ENCODE measurements at regions of chr1 and their contacts with region 1.

Region 1: DNA sequence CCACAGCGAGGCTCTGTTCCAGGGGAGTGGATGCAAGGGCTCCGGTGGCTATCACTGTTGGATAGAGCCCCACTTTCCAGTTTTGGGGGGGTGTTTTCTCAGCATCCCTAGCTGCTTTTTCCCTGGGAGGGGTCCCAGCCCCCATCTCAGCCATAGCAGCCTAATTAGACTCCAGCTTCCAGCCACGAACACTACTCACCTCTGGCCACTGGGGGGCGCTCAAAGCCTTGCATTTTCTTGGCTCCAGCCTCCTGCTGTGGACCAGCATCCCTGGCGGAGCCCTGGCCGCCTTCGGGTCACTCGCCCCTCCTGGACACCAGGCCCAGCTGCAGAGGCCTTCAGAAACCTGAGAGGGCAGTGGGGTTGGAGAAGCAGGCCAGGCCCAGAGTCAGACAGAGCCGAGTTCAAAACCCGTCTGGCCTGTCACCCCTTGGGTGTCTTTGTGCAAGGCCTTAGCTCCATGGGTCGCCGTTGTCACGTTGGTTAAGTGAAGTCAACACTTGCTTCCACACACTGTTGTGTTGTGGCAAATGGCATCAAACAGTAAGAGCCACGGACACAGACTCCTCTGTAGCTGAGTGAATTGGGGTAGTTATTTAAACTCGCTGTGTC is 93.5 kb upstream of the ACTL8 start:
- DNase-seq: peak; percentile 10 to 96
- H3K4me3 ChIP-seq: no peak overlapping the region
- H3K27ac ChIP-seq: no peak overlapping the region
- H3K4me1 ChIP-seq: peaks cover 0 to 4% (median 0%) of the 10 kb centered on the region in 4 experiments; a peak in 2 of 7 replicates
- H3K27me3 ChIP-seq: no peaks in the 10 kb centered on the region
- CTCF ChIP-seq: peak; percentile 90 to 94 (median 91)
- EP300 ChIP-seq: no peak
- POLR2A ChIP-seq: no peak
- RAD21 ChIP-seq: peak; percentile 92 to 95

Region 2: DNA sequence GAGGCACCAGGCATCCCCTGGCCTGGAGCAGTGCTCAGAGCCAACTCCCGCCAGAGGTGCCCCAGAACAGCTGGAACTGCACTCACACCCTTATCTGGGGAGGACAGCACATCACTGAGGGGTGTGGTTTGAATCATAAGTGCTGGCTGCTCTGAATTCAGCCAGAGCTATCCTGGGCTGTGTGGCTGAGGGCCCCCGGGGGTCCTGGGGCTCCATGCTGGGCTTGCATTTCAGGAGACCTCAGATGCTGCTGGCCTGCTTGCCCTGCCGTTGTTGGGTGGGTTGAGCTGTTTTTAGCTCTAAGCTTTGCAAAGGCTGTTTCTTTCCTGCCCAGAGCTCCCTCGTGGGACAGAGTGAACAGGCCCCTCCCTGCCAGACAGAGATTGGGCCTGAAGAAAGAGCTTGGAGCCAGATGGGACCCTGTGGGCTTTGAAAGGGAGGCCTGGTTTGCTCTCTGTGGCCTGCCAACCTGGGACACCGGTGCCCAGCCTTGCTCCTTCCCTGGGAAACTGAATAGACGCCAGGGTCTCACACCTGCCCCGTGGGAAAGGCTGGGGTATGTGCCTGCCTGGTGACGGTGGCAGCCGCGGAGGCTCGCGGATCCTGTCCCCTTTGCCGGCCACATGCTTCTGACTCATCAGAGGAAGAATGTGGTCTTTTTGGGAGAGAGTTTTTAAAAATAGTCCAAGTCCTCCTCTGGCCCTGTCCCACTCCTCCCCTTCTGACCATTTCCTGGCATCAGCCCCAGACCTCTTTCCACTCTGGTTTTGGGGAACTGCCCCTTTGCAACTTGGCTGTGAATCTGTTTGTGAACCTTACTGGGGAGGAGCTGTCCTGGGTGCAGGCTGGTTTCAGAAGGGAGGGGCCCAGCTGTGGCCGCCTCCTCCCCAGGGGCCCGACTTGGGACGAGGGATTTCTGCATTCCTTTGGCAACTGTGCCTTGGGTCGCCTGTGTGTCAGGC is 92.2 kb before region 1 on chr1:
- CTCF ChIA-PET with region 1: interaction called, 12 read pairs
- POLR2A ChIA-PET with region 1: no interaction called
- DNase-seq: no peak
- H3K4me3 ChIP-seq: 0 out of 8 replicates have a peak overlapping the region, but pooled peaks of 1 of the 4 experiments have one; percentile 8
- H3K27ac ChIP-seq: peak overlapping the region; percentile 24; the same call in 1 of the 2 replicates
- H3K4me1 ChIP-seq: peaks cover 23 to 78% (median 60%) of the 10 kb centered on the region in 4 experiments
- H3K27me3 ChIP-seq: no peaks in the 10 kb centered on the region
- CTCF ChIP-seq: no peak
- EP300 ChIP-seq: no peak
- POLR2A ChIP-seq: no peak
- RAD21 ChIP-seq: no peak

Region 3: DNA sequence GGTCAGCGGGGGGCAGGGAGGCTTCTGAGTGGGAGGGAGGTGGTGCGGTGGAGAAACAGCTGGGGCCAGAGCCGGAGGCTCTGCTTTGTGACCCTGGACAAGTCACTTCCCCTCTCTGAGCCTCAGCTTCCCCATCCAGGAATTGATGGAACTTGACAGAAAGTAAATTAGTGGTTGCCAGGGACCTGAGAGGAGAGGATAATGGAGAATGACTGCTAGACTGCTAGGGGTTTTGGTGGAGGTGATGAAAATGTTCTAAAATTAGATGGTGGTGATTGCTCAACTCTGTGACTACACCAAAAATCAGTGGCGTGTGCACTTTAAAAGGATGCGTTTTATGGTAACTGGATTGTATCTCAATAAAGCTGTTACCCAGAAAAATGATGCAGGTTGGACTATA is 21.3 kb before region 1 on chr1:
- CTCF ChIA-PET with region 1: interaction called, 18 read pairs
- POLR2A ChIA-PET with region 1: no interaction called
- DNase-seq: no peak
- H3K4me3 ChIP-seq: no peak overlapping the region
- H3K27ac ChIP-seq: no peak overlapping the region
- H3K4me1 ChIP-seq: 0 out of 7 replicates have a peak, but pooled peaks cover 0 to 2% (median 0%) of the 10 kb centered on the region in 4 experiments
- H3K27me3 ChIP-seq: no peaks in the 10 kb centered on the region
- CTCF ChIP-seq: no peak
- EP300 ChIP-seq: no peak
- POLR2A ChIP-seq: no peak
- RAD21 ChIP-seq: no peak

Region 4: GRCh38 chr1:17682399-17682798 is 20.7 kb after region 1 on chr1:
- CTCF ChIA-PET with region 1: interaction called, 41 read pairs
- POLR2A ChIA-PET with region 1: no interaction called
- DNase-seq: no peak
- H3K4me3 ChIP-seq: no peak overlapping the region
- H3K27ac ChIP-seq: no peak overlapping the region
- H3K4me1 ChIP-seq: peaks cover 0 to 8% (median 5%) of the 10 kb centered on the region in 4 experiments; a peak in 5 of 7 replicates
- H3K27me3 ChIP-seq: no peaks in the 10 kb centered on the region
- CTCF ChIP-seq: no peak
- EP300 ChIP-seq: no peak
- POLR2A ChIP-seq: no peak
- RAD21 ChIP-seq: no peak

Region 5: DNA sequence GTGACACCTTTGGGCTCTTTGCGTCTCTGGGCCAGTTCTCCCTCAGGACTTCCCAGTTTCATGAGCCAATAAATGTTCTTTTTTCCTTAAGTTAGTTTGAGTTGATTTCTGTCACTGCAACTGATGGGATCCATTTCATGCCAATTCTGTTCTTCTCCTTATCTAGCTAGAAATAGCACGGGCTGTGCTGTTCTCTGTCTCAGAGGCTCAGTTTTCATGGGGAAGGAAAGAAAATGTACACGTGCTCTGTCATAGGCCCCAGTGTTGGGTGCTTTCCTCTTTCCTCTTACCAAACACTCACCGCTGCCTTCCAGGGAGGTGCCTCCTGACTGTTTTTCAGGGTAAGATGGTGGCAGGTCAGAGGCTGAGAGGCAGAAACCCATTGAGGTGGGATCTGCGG is 50.3 kb after region 1 on chr1:
- CTCF ChIA-PET with region 1: interaction called, 17 read pairs
- POLR2A ChIA-PET with region 1: no interaction called
- DNase-seq: no peak
- H3K4me3 ChIP-seq: no peak overlapping the region
- H3K27ac ChIP-seq: no peak overlapping the region
- H3K4me1 ChIP-seq: no peaks in the 10 kb centered on the region
- H3K27me3 ChIP-seq: peaks cover 0 to 2% (median 0%) of the 10 kb centered on the region in 4 experiments; a peak in 1 of 7 replicates
- CTCF ChIP-seq: no peak
- EP300 ChIP-seq: no peak
- POLR2A ChIP-seq: no peak
- RAD21 ChIP-seq: no peak

Region 6: DNA sequence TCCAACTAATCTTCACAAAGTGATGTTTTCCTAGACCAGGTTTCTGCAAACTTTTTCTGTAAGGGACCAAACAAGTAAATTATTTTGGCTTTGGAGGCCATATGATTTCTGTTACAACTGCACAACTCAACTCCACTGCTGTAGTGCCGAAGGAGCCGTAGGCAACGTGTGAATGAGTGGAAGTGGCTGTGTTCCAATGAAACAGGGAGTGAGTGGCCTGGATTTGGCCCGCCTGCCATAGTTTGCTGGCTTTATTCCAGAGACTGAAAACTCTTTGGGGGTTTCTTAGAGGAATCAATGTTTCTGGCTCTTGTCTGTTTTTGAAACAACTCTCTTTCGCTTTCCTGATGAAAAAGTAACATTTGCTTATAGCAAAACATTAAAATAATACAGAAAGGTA is 80.9 kb after region 1 on chr1:
- CTCF ChIA-PET with region 1: interaction called, 26 read pairs
- POLR2A ChIA-PET with region 1: no interaction called
- DNase-seq: no peak
- H3K4me3 ChIP-seq: no peak overlapping the region
- H3K27ac ChIP-seq: no peak overlapping the region
- H3K4me1 ChIP-seq: peaks cover 0 to 2% (median 0%) of the 10 kb centered on the region in 4 experiments; a peak in 2 of 7 replicates
- H3K27me3 ChIP-seq: no peaks in the 10 kb centered on the region
- CTCF ChIP-seq: no peak
- EP300 ChIP-seq: no peak
- POLR2A ChIP-seq: no peak
- RAD21 ChIP-seq: no peak

Region 7: GRCh38 chr1:17826165-17826488 is 164.5 kb after region 1 on chr1:
- CTCF ChIA-PET with region 1: interaction called, 28 read pairs
- POLR2A ChIA-PET with region 1: no interaction called
- DNase-seq: peak in 1 of 2 experiments; percentile 90
- H3K4me3 ChIP-seq: no peak overlapping the region
- H3K27ac ChIP-seq: no peak overlapping the region
- H3K4me1 ChIP-seq: no peaks in the 10 kb centered on the region
- H3K27me3 ChIP-seq: 0 out of 7 replicates have a peak, but pooled peaks cover 0 to 2% (median 0%) of the 10 kb centered on the region in 4 experiments
- CTCF ChIP-seq: peak; percentile 77 to 82 (median 78)
- EP300 ChIP-seq: no peak
- POLR2A ChIP-seq: no peak
- RAD21 ChIP-seq: peak; percentile 69 to 76

Measured in H1 (cell line).